Activated naive CD4-positive, alpha-beta T cell treated with anti-CD3 and anti-CD28 coated beads, Interleukin-2, amount 10 ng/mL, durations not matched to agents 7 days and 5 days (primary cell): ENCODE measurements at regions of chr13 and their contacts with region 1.

Region 1: GRCh38 chr13:25574437-25575411 is 202.9 kb downstream of the ATP8A2 start:
- DNase-seq: peak; percentile 85
- H3K4me3 Mint-ChIP-seq: no peak overlapping the region
- H3K27ac Mint-ChIP-seq: no peak overlapping the region
- H3K4me1 Mint-ChIP-seq: no peaks in the 10 kb centered on the region
- H3K27me3 Mint-ChIP-seq: peaks cover 31% of the 10 kb centered on the region

Region 2: DNA sequence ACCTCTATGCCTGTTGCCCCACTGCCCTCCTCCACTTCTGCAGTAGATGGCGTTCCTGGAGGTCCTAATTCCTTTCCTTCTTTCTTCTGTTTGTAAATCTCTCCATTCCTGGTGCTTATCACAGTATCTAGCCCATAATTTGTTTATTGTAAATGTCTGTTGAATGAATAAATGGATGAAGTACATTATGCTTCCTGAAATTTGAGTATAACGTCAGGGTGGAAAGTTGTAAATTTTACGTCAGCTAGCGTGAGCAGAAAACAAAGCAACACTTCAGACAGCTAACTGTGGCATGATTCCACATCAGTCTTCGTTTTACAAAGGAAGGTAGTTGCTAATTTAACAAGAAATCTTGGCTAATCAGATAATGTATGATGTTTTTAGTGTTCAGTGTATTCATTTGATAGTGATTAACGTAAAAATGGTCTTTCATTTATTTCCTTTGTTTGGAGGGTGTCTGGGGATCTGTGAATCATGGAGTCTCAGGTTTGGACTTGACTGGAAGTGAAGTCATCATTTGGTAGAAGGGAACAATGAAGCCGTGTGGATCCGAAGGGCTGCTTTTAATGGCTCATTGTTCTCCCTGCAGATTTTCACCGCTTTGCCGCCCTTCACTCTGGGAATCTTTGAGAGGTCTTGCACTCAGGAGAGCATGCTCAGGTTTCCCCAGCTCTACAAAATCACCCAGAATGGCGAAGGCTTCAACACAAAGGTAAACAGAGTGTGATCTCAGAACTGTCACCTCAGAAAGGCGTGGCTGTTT is 262.0 kb after region 1 on chr13:
- CTCF ChIA-PET with region 1: no interaction called
- DNase-seq: no peak
- H3K4me3 Mint-ChIP-seq: no peak overlapping the region
- H3K27ac Mint-ChIP-seq: no peak overlapping the region
- H3K4me1 Mint-ChIP-seq: no peaks in the 10 kb centered on the region
- H3K27me3 Mint-ChIP-seq: peaks cover 23% of the 10 kb centered on the region

Region 3: GRCh38 chr13:26062844-26063444 is 488.2 kb after region 1 on chr13:
- CTCF ChIA-PET with region 1: interaction called, 10 read pairs
- DNase-seq: peak; percentile 68
- H3K4me3 Mint-ChIP-seq: no peak overlapping the region
- H3K27ac Mint-ChIP-seq: no peak overlapping the region
- H3K4me1 Mint-ChIP-seq: peaks cover 13% of the 10 kb centered on the region
- H3K27me3 Mint-ChIP-seq: peaks cover 15% of the 10 kb centered on the region

Region 4: DNA sequence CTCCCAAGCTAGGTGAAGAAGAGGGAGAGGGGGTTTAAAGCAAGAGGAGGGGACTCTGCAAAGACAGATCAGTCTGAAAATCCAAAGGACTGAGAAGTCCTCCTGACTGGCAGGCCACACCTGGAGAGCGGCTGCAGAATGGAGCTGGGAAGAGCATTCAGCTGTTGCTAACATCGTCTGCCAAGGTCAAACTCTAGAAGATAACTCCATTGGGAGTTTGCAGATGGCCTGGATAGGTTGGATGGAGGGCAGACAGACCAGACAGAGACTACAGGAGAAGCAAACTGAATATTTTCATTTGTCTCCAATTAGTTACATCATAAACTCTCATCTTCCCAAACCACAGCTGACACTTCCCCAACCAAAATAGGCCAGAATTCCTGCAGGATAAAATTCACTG is 497.0 kb after region 1 on chr13:
- CTCF ChIA-PET with region 1: interaction called, 20 read pairs
- DNase-seq: no peak
- H3K4me3 Mint-ChIP-seq: no peak overlapping the region
- H3K27ac Mint-ChIP-seq: no peak overlapping the region
- H3K4me1 Mint-ChIP-seq: peaks cover 5% of the 10 kb centered on the region
- H3K27me3 Mint-ChIP-seq: peaks cover 52% of the 10 kb centered on the region